ENCODE measurements at regions of chr18 and their contacts with region 1.

Region 1: GRCh38 chr18:47260120-47260923 is 8.9 kb upstream of the SKOR2 start:
- DNase-seq: no peak
- H3K4me3 ChIP-seq: no peak overlapping the region
- CTCF ChIP-seq: no peak

Region 2: GRCh38 chr18:47143899-47144485 is 116.3 kb before region 1 on chr18:
- CTCF ChIA-PET with region 1: no interaction called
- POLR2A ChIA-PET with region 1: no interaction called
- DNase-seq: no peak
- H3K4me3 ChIP-seq: no peak overlapping the region
- CTCF ChIP-seq: no peak

Region 3: DNA sequence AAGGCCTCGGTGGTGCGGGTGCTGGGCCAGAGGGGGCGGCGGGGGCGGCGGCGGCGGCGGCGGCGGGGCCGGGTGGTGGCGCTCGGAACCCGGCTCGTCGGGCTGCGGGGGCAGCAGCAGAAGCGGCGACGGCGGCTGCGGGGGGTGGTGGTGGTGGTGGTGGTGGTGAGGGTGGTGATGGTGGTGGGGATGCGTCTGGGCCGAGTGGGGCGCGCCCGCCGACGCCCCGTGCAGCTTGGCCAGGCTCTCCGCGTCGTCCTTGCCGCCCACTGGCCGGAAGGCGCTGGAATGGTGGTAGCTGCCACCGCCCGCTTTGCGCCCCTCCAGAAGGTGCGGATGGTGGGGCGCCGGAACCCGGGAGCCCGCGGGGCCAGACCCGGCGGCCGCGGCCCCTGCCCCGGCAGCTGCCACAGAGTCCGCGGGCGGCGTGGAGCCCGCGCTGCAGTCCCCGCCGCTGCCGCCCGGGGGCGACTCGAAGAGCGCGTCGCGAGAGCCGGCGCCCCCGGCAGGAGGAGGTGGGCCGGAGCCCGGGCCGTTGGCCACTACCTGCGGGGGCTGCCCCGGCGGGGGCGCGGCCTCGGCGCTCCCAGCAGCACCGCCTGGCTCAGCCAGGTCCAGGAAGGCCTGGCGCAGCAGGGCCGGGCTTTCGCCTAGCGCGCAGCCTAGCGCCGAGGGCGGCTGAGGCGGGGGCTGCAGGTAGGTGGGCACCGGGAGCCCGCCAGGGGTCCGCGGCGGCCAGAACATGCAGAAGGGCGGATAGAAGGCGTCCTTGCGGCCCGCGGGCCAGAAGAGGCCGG is 13.1 kb before region 1 on chr18:
- CTCF ChIA-PET with region 1: interaction called, 40 read pairs
- POLR2A ChIA-PET with region 1: no interaction called
- DNase-seq: no peak
- H3K4me3 ChIP-seq: no peak overlapping the region
- CTCF ChIP-seq: peak; percentile 39

Region 4: DNA sequence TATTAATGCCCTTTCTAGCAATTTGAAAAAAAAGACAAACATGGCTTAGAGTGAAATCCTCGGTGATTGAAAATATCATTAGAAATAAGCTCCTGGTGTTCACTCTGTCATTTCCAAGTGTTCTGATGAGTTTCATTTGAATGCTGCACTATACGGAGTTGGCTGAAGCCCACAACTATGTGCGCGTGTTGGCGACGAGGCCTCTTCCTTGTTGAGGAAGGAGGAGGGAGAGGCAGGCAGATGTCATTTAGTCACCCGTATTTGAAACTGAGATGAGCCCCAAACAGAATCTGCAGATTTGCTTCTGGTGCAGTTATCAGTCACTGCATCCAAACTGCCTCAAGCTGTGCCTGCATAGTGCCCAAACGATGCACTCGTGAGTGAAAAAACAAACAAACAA is 14.6 kb after region 1 on chr18:
- CTCF ChIA-PET with region 1: interaction called, 18 read pairs
- POLR2A ChIA-PET with region 1: no interaction called
- DNase-seq: no peak
- H3K4me3 ChIP-seq: no peak overlapping the region
- CTCF ChIP-seq: no peak

Region 5: DNA sequence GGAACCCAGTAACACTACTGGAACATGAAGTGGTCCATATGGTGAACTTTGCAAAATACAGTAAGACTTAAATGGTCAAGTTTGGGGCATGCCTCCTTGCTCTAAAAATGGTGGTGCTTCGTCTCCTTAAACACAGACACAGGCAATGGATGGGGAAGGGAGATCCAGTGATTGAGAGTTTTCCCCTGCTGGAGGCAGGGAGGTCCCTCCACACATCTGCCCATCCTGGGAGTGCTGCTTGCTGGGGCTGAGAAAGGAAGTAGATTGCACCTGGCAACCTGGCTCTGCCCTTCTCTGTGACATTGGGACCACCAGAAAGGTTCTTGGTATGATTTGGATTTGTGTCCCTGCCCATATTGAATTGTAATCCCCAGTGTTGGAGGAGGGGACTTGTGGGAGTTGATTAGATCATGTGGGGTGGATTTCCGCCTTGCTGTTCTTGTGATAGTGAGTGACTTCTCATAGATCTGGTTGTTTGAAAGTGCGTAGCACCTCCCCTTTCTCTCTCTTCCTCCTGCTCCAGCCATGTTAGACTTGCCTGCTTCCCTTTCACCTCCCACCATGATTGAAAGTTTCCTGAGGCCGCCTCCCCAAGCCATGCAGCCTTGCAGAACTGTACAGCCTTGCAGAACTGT is 26.6 kb after region 1 on chr18:
- CTCF ChIA-PET with region 1: no interaction called
- POLR2A ChIA-PET with region 1: no interaction called
- DNase-seq: no peak
- H3K4me3 ChIP-seq: no peak overlapping the region
- CTCF ChIP-seq: no peak

Region 6: DNA sequence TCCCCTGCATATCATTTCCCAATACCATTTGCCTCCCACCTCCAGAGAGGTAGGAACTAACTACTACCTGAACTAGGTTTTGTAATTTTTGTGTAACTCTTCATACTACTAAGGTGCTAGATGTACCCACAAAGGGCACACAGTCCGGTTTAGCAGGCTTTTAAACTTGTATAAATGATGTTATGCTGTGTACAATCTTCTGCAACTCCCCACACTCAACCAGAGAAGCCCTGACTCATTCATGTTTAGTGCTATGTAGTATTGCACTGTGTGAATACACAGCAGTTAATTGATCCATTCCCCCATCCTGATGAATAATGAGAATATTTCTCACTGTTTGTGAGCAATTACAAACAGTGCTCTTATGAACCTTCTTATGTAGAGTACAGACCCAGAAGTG is 384.6 kb after region 1 on chr18:
- CTCF ChIA-PET with region 1: no interaction called
- POLR2A ChIA-PET with region 1: no interaction called
- DNase-seq: no peak
- H3K4me3 ChIP-seq: no peak overlapping the region
- CTCF ChIP-seq: no peak